Activated CD4-positive, alpha-beta T cell treated with anti-CD3 and anti-CD28 coated beads for 36 hours (primary cell): ENCODE measurements at regions of chr19 and their contacts with region 1.

Region 1: GRCh38 chr19:4444765-4445741 is 12.5 kb downstream of the UBXN6 start:
- DNase-seq: no peak
- ATAC-seq: no peak
- H3K4me3 Mint-ChIP-seq: no peak overlapping the region
- H3K27ac Mint-ChIP-seq: no peak overlapping the region
- H3K4me1 Mint-ChIP-seq: no peaks in the 10 kb centered on the region
- H3K27me3 Mint-ChIP-seq: no peaks in the 10 kb centered on the region

Region 2: GRCh38 chr19:3868770-3869456 is 576.1 kb before region 1 on chr19 and contains the start of gene ZFR2:
- CTCF ChIA-PET with region 1: no interaction called
- POLR2A ChIA-PET with region 1: no interaction called
- intact Hi-C with region 1: no loop called
- DNase-seq: peak; percentile 54
- ATAC-seq: peak; percentile 39
- H3K4me3 Mint-ChIP-seq: no peak within 1 kb of the TSS
- H3K27ac Mint-ChIP-seq: no peak within 1 kb of the TSS
- H3K4me1 Mint-ChIP-seq: peaks cover 10% of the 10 kb centered on the region
- H3K27me3 Mint-ChIP-seq: peaks cover 35% of the 10 kb centered on the region
- total RNA-seq, gene ZFR2: 0.23 to 0.51 TPM

Region 3: DNA sequence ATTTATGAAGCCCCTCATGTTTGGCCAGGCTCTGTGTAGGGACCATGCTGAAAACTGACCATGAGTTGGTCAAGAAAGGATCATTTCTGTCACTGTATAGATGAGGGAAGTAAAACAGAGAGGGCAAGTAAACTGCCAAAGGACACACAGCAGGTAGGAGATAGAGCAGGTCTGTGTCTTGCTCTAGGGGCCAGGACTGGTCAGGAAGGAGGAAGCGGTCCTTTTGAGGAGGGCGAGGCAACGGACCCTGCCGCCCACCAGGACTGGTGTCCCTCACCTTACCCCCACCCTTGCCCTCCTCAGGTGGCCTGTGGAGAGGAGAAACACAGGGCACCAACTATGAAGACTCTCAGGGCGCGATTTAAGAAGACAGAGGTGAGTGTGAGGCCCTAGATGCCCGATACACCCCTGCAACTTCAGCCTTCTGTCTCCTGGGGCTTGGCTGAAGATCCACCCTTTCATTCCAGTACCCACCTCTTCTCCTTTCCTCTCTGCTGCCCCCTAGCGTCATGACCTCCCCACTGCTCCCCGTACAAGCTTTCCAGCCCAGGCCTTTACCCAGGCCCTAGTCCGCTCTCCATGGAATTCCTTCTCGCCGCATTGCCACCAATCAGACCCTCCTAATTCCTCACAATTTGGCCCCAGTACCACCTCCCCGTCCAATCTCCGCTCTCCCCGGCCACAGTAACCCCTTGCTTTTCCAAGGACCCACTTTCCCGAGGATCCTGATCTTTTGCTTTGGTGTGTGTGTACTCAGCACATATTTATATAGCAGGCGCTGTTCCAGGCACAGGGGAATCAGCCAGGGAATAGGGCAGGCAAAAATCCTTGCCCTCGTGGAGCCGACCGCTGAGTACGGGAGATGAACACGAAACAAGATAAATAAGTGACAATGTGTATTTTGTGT is 258.7 kb before region 1 on chr19:
- CTCF ChIA-PET with region 1: no interaction called
- POLR2A ChIA-PET with region 1: no interaction called
- intact Hi-C with region 1: no loop called
- DNase-seq: peak; percentile 92
- ATAC-seq: peak; percentile 74
- H3K4me3 Mint-ChIP-seq: no peak overlapping the region
- H3K27ac Mint-ChIP-seq: no peak overlapping the region
- H3K4me1 Mint-ChIP-seq: peaks cover 11% of the 10 kb centered on the region
- H3K27me3 Mint-ChIP-seq: no peaks in the 10 kb centered on the region

Region 4: DNA sequence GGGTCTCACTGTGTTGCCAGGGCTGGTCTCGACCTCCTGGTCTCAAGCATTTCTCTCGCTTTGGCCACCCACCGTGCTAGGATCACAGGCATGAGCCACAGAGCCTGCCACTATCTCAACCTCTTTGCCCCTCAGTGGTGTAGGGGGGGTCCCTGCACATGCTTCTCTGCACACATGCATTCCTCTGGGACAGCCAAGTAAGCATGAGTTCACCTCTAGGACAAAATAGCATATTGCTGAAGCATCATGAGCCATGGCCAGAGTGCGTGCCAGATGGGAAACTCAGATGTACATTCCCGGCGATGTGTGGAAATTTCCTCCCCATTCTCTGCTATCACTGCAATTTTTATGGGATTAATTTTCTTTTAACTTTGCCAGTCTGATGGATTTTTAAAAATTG is 19.5 kb before region 1 on chr19:
- CTCF ChIA-PET with region 1: interaction called, 4 read pairs
- POLR2A ChIA-PET with region 1: interaction called, 13 read pairs
- intact Hi-C with region 1: no loop called
- DNase-seq: no peak
- ATAC-seq: no peak
- H3K4me3 Mint-ChIP-seq: no peak overlapping the region
- H3K27ac Mint-ChIP-seq: no peak overlapping the region
- H3K4me1 Mint-ChIP-seq: no peaks in the 10 kb centered on the region
- H3K27me3 Mint-ChIP-seq: no peaks in the 10 kb centered on the region